IMR-90 (cell line): ENCODE measurements at regions of chr4 and their contacts with region 1.

Region 1: DNA sequence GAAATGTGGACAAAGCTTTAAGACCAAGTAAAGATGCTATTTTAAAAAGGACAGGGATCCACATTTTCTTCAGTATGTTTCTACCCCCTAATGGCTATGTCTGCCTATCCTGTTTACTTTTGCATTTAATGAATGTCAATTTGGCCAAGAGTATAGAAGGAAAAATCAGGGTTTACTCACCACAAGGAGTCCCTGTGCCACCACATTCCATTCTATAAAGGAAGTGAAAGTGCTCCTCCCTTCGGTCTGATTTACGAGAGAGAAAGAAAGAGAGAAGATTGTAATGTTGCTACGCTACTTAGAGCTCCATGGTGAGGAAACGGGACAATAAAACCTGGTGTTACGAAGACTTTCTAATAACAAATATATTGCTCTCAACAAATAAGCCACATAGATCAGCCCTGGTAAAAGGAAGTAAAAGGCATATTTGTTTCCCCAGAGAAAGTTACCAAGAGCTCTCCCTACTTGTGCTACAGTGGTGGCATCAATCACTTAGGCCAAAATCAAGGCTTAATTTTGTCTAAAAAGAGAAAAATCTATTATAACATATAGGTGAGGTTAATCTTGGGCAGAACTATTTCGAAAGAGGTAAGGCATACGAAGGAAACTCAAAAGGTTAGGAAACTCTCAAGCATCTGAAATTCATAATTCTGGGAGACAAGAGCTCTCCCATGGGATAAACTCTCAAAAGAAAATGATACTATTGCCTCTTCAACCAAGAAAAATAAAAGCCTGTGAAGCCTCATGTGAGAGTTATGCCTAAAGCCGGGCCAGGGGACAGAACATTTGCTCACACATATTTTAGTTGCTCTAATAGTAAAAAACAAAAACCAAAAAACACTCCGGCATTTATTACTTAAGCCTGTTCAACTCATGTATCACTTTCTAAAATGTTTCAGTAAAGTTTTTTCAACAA is 29.5 kb downstream of the TAPT1 start:
- DNase-seq: peak; percentile 65
- ATAC-seq: peak; percentile 93
- H3K4me3 ChIP-seq: peak overlapping the region; percentile 18; the same call in 1 of the 2 replicates
- H3K27ac ChIP-seq: no peak overlapping the region
- H3K4me1 ChIP-seq: no peaks in the 10 kb centered on the region
- H3K27me3 ChIP-seq: no peaks in the 10 kb centered on the region
- CTCF ChIP-seq: peak; percentile 48
- POLR2A ChIP-seq: no peak
- RAD21 ChIP-seq: peak; percentile 21; the same call in 1 of the 2 replicates

Region 2: GRCh38 chr4:15805583-15806517 is 390.9 kb before region 1 on chr4:
- CTCF ChIA-PET with region 1: no interaction called
- POLR2A ChIA-PET with region 1: no interaction called
- dilution Hi-C with region 1: no loop called
- in situ Hi-C with region 1: no loop called
- intact Hi-C with region 1: loop called (anchors 5 kb)
- DNase-seq: peak; percentile 63
- ATAC-seq: peak; percentile 84
- H3K4me3 ChIP-seq: no peak overlapping the region
- H3K27ac ChIP-seq: no peak overlapping the region
- H3K4me1 ChIP-seq: no peaks in the 10 kb centered on the region
- H3K27me3 ChIP-seq: peaks cover 27% of the 10 kb centered on the region
- CTCF ChIP-seq: peak; percentile 83
- POLR2A ChIP-seq: no peak
- RAD21 ChIP-seq: peak; percentile 84

Region 3: GRCh38 chr4:16026160-16026761 is 170.5 kb before region 1 on chr4:
- CTCF ChIA-PET with region 1: interaction called, 4 read pairs
- POLR2A ChIA-PET with region 1: no interaction called
- dilution Hi-C with region 1: no loop called
- in situ Hi-C with region 1: no loop called
- intact Hi-C with region 1: loop called (anchors 1 kb)
- DNase-seq: peak; percentile 61
- ATAC-seq: no peak
- H3K4me3 ChIP-seq: no peak overlapping the region
- H3K27ac ChIP-seq: no peak overlapping the region
- H3K4me1 ChIP-seq: no peaks in the 10 kb centered on the region; the same call in 1 of the 2 replicates
- H3K27me3 ChIP-seq: peaks cover 29% of the 10 kb centered on the region
- CTCF ChIP-seq: peak; percentile 83
- POLR2A ChIP-seq: no peak
- RAD21 ChIP-seq: peak; percentile 77